ENCODE measurements at regions of chr1 and their contacts with region 1.

Region 1: GRCh38 chr1:167635941-167636340 is 5.9 kb downstream of the RCSD1 start:
- DNase-seq: no peak
- ATAC-seq: peak in 2 of 4 donors; percentile 1 to 5
- H3K4me3 ChIP-seq: peak overlapping the region; percentile 40
- H3K27ac ChIP-seq: peak overlapping the region; percentile 97
- H3K4me1 ChIP-seq: peaks cover 64% of the 10 kb centered on the region
- H3K27me3 ChIP-seq: no peaks in the 10 kb centered on the region
- CTCF ChIP-seq: no peak

Region 2: GRCh38 chr1:167650269-167651160 is 14.6 kb after region 1 on chr1:
- intact Hi-C with region 1: loop called in 1 of 2 experiments (anchors 2 kb)
- DNase-seq: no peak
- ATAC-seq: peak; percentile 23 to 64 (median 54)
- H3K4me3 ChIP-seq: no peak overlapping the region
- H3K27ac ChIP-seq: peak overlapping the region; percentile 78
- H3K4me1 ChIP-seq: peaks cover 71% of the 10 kb centered on the region
- H3K27me3 ChIP-seq: no peaks in the 10 kb centered on the region
- CTCF ChIP-seq: no peak

Region 3: DNA sequence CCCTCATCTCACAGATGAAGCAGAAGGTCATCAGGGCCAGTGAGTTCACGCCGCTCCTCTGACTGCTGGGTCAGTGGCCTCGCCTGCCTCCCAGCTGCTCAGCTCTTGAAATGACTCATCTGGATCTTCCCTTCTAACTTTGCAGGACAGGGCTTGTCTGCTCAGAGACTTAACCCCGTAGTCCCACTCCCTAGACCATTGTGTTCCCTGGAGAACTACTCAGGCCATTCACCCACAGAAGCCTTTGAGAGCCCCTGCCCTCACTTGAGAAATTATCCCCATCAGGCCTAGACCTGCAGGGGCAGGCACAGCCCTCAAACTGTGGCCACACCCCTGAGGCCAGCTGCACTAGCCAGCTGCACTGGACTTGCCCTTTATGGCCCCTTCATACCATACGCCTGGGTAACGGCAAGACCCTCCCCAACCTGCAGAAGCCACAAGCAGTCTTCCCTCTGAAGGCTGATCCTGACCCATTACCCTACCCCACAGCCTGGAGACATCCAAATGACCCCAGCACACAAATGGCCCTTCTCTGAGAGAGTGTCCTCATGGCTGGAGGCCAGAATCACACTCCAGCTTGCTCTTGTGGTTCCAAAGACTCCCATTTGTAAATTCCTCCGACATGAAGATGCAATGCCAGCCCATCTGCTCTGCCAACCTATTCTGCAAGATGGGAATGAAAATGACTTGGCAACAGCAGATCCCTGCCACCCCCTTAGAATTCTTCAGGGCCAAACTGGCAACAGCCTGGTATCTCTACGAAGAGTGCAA is 27.2 kb after region 1 on chr1:
- intact Hi-C with region 1: no loop called
- DNase-seq: peak; percentile 51 to 79
- ATAC-seq: peak; percentile 81 to 87 (median 82)
- H3K4me3 ChIP-seq: no peak overlapping the region
- H3K27ac ChIP-seq: peak overlapping the region; percentile 93
- H3K4me1 ChIP-seq: peaks cover 90% of the 10 kb centered on the region
- H3K27me3 ChIP-seq: no peaks in the 10 kb centered on the region
- CTCF ChIP-seq: no peak

Measured in psoas muscle (tissue), 8 donors.